Esophagus squamous epithelium (tissue), 5 donors: ENCODE measurements at regions of chr1 and their contacts with region 1.

Region 1: DNA sequence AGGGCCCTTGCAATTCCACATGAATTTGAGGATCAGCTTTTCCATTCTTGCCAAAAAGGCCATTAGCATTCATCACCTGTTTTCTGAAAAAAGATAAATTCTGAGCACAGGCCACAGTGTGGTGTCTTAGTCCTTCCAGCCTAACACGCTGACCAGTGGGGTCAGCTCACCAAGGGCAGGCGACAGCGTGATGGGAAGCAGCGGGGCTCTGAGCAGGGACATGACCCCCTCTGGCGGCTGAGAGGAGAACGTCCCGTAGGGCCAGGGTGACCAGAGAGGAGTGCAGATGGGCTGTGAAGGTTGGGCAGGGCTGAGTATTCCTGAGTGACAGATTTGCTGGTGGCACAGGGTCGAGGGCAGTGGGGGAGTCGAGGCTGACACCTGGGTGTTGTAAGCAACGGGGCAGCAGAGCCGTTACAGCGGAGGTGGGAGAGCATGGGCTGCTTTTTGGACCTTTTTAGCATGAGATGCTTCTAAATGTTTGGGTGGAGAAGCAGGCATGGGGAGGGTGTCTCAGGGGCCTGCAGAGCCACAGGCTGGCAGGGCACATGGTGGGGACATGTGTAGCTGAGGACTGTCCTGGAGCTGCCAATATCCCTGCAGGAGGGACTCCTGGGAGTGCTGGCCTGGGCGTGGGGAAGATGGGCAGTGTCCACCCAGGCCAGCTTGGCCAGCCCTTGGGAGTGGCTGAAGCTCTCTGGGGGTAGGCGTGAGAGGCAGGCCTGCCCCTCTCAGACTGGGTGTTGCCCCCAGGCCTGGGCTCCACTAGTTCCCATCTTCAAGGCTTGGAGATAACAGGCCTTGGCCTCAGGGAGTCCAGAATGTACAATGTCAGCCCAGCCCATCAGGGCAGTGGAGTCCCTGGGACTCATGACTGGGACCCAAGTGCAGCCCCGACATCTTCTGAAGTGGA is 8.6 kb upstream of the CALML6 start:
- DNase-seq: no peak
- H3K4me3 ChIP-seq: no peak overlapping the region
- H3K27ac ChIP-seq: peak overlapping the region in 3 of 4 donors; percentile 7 to 52 (median 21)
- H3K4me1 ChIP-seq: peaks cover 13 to 43% (median 22%) of the 10 kb centered on the region in 3 donors
- H3K27me3 ChIP-seq: no peaks in the 10 kb centered on the region
- CTCF ChIP-seq: peak; percentile 81 to 93 (median 90)
- POLR2A ChIP-seq: no peak

Region 2: DNA sequence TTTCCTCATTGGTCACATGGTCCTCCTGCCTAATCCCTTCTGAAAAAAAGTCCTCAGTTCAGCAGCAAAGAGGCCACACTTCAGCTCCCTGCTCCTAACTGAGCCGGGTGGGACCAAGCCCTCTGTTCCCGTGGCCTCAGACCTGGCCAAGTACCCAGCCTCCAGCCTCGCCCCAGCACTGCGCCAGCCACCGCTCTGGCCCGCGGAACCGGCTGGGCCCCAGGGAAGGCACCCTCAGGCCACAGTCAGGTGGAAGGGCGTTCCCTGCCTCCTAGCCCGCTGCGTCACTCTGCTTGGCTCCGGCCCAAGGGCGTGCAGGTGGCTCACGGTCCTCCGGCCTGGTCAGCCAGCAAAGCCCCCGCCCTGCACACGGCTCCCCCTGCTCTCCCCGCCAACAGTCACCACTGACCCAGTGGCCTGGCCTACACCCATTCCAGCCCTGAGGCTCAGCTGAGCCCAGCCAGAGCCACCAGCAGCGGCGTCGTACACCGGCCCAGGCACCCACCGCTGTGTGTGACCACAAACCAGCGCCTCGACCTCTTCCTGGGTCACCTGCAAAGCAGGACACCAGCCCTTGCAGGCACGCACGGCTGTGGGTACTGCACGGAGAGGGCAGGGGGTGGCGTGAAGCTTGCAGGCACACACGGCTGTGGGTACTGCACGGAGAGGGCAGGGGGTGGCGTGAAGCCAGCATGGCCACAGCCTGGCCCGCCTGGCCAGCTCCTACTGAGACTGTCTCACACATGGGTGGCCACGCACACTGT is 147.6 kb before region 1 on chr1:
- intact Hi-C with region 1: loop called (anchors 10 kb)
- DNase-seq: no peak
- H3K4me3 ChIP-seq: no peak overlapping the region
- H3K27ac ChIP-seq: peak overlapping the region; percentile 58 to 75 (median 61)
- H3K4me1 ChIP-seq: peaks cover 14 to 28% (median 14%) of the 10 kb centered on the region in 3 donors
- H3K27me3 ChIP-seq: no peaks in the 10 kb centered on the region
- CTCF ChIP-seq: no peak
- POLR2A ChIP-seq: no peak